Psoas muscle (tissue), 8 donors: ENCODE measurements at regions of chr21 and their contacts with region 1.

Region 1: GRCh38 chr21:39349211-39350093 is 564 bp upstream of the HMGN1 start:
- DNase-seq: peak; percentile 94 to 96
- ATAC-seq: peak; percentile 96 to 98 (median 98)
- H3K4me3 ChIP-seq: peak overlapping the region; percentile 88
- H3K27ac ChIP-seq: peak overlapping the region; percentile 85
- H3K4me1 ChIP-seq: peaks cover 13% of the 10 kb centered on the region
- H3K27me3 ChIP-seq: no peaks in the 10 kb centered on the region
- CTCF ChIP-seq: no peak

Region 2: DNA sequence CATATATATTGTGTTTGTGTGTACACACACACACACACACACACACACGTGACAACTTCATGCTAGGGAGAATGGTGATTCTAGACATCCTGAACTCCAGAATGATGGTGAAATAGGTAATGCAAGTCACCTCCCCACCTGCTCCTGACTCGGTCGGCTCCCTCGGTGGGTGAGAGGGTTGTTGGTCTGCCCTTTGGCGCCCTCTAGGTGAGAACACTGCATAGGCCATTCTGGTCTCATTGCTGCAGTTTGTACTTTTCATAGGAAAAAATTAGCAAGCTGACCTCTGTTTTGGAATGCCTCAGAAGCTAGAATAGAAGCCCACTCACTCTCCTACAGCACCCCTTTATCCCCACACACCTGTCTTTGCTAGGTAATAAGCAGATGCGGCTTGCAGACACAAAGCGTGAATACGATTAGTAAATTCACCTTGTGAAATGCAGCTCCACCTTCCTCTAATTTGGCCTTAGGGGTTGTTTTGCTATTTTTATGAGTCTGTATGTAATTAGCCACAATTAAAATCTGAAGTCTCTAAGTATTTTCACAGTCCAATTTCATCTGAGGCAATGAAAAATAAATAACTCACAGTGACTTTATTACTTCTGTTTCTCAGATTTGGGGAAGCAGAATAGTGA is 1222.7 kb before region 1 on chr21:
- intact Hi-C with region 1: no loop called
- DNase-seq: peak; percentile 48 to 62
- ATAC-seq: peak; percentile 52 to 84 (median 76)
- H3K4me3 ChIP-seq: no peak overlapping the region
- H3K27ac ChIP-seq: no peak overlapping the region
- H3K4me1 ChIP-seq: no peaks in the 10 kb centered on the region
- H3K27me3 ChIP-seq: peaks cover 0 to 2% (median 0%) of the 10 kb centered on the region in 3 donors
- CTCF ChIP-seq: peak; percentile 62

Region 3: DNA sequence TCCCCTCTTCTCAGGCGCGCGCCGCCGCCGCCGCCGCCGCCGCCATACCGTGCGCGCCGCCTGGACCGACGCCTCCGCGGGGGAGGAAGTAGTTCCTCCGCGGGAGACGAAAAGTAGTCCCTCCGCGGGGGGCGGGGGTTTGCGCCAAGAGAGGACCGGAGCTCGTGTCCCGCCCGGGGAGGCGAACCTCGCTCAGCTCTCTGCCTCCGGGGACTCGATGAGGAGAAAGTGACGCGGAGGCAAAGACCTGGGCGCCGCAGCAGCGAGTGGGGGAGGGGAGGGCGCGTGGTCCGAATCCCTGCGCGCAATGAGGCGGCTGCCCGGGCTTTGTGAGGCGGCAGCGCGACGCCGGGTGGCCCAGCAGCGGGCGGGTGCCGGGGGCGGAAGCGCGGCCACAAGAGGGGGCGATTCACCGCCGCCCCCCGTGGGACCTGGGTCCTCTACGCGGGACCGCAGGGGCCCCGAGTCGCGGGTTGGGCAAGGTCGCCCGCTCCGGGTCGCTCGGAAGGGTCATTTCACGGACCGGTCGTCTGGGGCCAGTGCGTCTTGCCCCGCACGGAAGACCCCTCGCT is 35.8 kb before region 1 on chr21 and contains the start of gene BRWD1:
- intact Hi-C with region 1: loop called (anchors 1 to 5 kb)
- DNase-seq: peak; percentile 86 to 93
- ATAC-seq: peak; percentile 82 to 88 (median 86)
- H3K4me3 ChIP-seq: peak within 1 kb of the TSS; percentile 97
- H3K27ac ChIP-seq: peak within 1 kb of the TSS; percentile 98
- H3K4me1 ChIP-seq: peaks cover 22% of the 10 kb centered on the region
- H3K27me3 ChIP-seq: no peaks in the 10 kb centered on the region
- CTCF ChIP-seq: peak; percentile 42
- total RNA-seq, gene BRWD1: 30.2 to 33.0 (median 32.0) TPM

Region 4: GRCh38 chr21:39379986-39380891 is 30.8 kb after region 1 on chr21:
- intact Hi-C with region 1: loop called (anchors 2 to 5 kb)
- DNase-seq: peak; percentile 97 to 99
- ATAC-seq: peak; percentile 99
- H3K4me3 ChIP-seq: peak overlapping the region; percentile 89
- H3K27ac ChIP-seq: peak overlapping the region; percentile 92
- H3K4me1 ChIP-seq: peaks cover 10% of the 10 kb centered on the region
- H3K27me3 ChIP-seq: no peaks in the 10 kb centered on the region
- CTCF ChIP-seq: no peak